Endothelial cell of umbilical vein (primary cell): ENCODE measurements at regions of chr3 and their contacts with region 1.

Region 1: DNA sequence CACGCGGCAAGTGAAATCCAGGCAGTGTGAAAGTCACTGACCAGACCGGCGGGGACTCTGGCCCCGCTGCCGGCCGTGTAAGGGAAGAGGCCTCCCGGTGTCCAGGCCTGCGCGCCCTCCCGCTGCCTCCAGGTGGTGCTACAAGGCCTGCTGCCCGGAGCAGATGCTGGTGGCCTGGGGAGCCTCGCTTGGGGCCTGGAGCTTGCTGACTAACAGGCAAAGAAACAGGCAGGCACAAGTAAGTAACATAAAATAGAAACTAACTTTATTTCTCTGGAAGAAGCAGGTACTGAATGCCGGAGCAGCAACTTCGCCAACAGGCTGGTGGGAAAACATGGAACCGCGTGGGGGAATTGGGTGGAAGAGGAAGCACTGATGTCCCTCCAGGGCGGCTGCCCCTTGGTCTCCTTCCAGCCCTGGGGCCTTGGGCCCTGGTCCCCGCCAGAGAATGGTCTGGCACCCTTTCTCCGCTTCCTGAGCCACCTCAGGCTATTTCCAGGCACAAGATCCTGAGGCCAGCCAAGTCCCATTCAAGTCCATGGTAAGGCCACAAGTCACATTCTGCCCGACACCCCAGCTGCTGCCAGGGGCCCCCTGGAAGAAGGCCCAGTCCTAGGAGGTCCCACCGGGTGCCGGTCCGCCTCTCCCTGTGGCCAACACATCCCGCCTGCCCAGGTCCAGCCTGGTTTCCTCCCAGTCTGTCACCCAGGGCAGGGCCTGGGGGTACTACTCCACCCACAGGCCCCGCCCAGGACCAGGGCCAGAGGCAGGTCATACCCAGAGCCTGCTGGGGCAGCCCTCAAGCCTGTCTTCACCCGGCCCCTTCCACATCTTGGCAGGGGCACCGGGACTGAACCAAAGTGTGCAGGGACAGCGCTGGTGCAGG is 45.0 kb downstream of the TNK2 start:
- DNase-seq: peak; percentile 81
- H3K4me3 ChIP-seq: no peak overlapping the region
- H3K27ac ChIP-seq: no peak overlapping the region
- H3K4me1 ChIP-seq: no peaks in the 10 kb centered on the region
- H3K27me3 ChIP-seq: no peaks in the 10 kb centered on the region
- CTCF ChIP-seq: peak; percentile 97
- POLR2A ChIP-seq: no peak

Region 2: DNA sequence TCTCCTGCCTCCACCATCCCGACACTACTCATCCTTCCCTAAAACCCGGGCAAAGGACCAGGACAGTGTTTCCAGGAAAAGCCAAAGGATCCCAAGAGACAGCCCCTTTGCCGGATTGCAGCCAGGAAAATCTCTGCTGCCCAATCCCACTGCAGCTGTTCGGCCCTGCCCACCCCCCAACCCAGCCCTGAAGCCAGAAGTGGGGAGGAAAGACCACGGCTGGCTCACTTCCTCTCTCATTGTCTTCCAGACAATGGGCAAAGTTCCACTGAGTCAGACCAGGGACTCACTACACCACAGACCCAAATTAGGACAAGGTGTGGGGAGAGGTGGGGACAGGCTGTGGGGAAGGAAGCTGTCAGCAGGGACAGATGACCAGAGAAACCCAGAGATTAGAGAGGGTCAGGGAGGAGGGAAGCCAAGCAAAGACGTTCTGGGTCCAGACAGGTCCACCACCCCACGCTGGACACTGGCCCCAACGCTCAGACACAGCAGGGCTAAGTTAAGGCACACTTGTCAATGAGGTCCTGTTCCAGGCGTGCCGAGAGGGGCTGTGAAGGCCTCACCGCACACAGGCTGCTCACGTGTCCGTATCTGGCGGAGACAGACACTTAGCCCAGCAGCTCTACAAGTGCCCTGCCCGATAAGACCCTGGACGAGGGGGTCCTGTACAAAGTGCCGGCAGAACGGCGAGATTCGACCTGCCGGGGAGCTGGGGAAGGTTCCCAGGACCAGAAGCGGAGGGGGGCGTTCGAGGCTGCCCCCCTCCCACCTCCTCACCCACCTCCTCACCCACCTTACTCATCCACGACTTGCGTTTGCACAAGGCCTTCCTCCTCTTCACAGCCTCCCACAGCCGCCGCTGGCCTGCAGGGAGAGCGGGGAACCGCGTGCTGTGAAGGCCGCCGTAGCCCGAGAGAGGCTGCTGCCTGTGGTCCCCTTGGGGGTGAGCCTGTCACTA is 23.1 kb after region 1 on chr3:
- CTCF ChIA-PET with region 1: interaction called, 454 read pairs
- POLR2A ChIA-PET with region 1: no interaction called
- dilution Hi-C with region 1: no loop called
- intact Hi-C with region 1: no loop called
- DNase-seq: peak; percentile 90
- H3K4me3 ChIP-seq: no peak overlapping the region
- H3K27ac ChIP-seq: peak overlapping the region; percentile 85
- H3K4me1 ChIP-seq: peaks cover 28% of the 10 kb centered on the region
- H3K27me3 ChIP-seq: no peaks in the 10 kb centered on the region
- CTCF ChIP-seq: no peak
- POLR2A ChIP-seq: peak; percentile 36

Region 3: DNA sequence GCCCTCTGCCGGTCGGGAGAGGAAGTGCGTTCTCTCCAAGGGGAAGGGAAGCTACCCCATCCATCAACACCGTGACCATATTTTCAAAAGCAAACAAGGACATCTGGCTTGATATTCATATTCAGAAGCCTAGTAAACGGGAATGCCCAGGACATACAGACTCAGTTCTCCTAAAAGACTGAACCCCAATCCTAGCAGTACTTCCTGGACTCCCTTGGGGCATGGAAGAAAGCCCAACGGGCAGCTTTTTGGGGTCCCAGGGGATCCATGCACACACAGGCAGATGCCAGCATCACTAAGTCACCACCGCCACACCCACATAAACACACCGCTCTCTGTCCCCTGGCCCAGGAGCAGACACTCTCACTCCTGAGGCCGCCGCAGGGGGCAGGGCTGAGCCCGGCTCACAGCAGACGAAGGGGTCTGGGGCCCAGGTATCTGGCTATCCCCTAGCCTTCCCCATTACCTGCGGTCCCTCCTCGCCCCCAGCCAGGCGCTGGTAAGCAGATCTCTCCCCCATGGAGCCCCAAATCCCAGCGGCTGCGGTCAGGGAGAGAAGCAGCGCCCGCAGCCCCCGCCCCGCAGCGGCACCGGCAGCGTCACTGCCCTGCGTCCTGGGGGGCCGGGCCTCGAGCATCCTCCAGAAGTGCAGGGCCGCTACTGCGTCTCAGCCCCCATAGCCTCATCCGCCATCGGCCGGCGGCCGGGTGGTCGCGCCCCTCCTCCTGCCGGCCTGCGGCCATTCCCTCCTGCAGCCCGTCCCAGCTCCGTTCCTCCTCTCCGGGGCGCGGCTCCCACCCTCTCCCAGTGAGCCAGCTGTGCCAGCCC is 31.6 kb after region 1 on chr3:
- CTCF ChIA-PET with region 1: interaction called, 454 read pairs
- POLR2A ChIA-PET with region 1: interaction called, 9 read pairs
- dilution Hi-C with region 1: no loop called
- intact Hi-C with region 1: loop called (anchors 1 kb)
- DNase-seq: peak; percentile 77
- H3K4me3 ChIP-seq: peak overlapping the region; percentile 62 to 80 (median 76)
- H3K27ac ChIP-seq: peak overlapping the region; percentile 46
- H3K4me1 ChIP-seq: peaks cover 45% of the 10 kb centered on the region
- H3K27me3 ChIP-seq: no peaks in the 10 kb centered on the region
- CTCF ChIP-seq: peak; percentile 78 to 92
- POLR2A ChIP-seq: peak; percentile 42

Region 4: DNA sequence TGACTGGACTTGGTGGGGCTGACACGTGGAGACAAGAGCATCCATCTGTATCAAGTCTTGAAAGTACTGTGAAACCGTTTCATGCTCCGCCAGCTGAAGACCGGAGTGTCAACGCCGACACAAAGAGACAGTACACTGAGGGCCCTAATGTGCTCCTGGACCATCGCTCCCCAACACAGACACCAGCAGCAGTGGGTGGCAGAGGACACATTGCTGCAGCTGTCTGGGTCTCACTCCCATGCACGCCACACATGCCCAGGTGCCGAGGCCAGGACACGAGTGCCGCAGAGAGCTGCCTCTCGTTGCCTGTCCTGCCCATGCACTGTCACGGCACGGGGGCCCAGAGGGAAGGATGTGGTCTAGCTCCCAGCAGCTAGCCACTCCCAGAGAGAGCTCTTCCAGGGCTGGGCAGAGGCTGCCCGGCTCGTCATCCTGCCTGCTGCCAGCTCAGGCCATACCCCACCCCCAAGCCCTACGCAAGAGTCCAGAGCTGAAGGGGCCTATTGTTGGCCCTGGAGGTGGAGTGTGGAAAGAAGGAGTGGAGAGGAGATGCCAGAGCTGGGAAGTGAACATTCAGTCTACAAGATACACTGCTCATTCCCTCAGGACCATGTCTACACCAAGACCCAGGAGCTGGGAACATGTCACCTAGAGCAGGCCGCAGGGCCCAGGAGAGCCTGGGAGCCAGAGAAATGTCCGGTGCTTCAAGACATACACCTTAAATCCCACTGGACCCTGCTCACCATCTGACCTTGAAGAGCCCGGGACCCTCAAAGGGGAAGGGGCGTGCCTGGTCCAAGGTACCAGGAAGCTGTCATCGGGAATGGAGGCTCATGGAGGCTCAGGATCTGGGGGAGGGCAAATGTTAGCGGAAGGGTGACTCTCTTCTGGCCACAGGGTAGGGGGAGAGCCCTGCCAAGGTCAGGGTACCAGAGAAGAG is 37.3 kb after region 1 on chr3:
- CTCF ChIA-PET with region 1: interaction called, 454 read pairs
- POLR2A ChIA-PET with region 1: no interaction called
- dilution Hi-C with region 1: no loop called
- intact Hi-C with region 1: no loop called
- DNase-seq: no peak
- H3K4me3 ChIP-seq: no peak overlapping the region
- H3K27ac ChIP-seq: no peak overlapping the region
- H3K4me1 ChIP-seq: peaks cover 30% of the 10 kb centered on the region
- H3K27me3 ChIP-seq: no peaks in the 10 kb centered on the region
- CTCF ChIP-seq: no peak
- POLR2A ChIP-seq: no peak

Region 5: DNA sequence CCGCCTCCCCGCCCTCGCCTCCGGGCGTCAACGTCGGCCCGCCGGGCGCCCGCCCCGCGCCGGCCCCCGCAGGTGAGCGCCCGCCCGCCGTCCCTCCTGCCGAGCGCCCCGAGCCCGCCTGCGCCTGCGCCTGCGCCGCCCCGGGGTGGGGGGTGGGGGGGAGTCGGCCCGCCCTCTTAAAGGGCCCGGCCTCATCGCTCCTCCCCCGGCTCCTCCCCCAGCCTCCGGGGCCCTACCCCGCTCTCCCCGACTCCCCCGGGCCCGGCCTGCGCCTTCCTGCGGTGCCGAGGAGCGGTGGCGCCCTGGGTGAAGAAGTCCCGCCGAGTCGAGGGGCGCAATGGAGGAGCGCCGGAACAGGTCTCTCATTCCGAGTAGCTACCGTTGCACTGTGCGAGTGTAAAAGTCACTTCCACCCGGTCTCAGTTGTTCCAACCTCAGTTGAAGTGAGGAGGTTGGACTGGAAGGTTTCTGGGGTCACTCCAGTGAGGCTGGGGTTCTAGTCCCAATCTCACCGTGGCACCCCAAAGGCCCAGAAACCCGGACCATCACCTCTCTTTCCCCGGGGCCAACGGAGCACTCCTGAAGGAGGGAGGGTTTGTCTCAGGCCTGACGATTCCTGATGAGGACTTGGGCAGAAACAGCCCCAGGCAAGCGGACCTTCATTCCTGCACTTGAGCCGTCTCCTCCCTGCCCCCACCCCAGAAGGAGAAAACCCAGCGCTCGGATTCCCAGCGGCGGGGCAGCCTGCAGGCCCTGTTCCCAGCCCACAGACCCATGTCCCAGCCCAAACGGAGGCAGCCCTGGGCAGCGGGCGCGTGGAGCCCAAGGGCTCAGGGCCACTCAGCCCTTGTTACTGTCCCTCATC is 46.5 kb after region 1 on chr3:
- CTCF ChIA-PET with region 1: interaction called, 101 read pairs
- POLR2A ChIA-PET with region 1: no interaction called
- dilution Hi-C with region 1: no loop called
- intact Hi-C with region 1: loop called (anchors 1 kb)
- DNase-seq: peak; percentile 73
- H3K4me3 ChIP-seq: peak overlapping the region in 2 of 3 experiments; percentile 0 to 54
- H3K27ac ChIP-seq: no peak overlapping the region
- H3K4me1 ChIP-seq: no peaks in the 10 kb centered on the region
- H3K27me3 ChIP-seq: no peaks in the 10 kb centered on the region
- CTCF ChIP-seq: no peak
- POLR2A ChIP-seq: no peak

Region 6: GRCh38 chr3:196412704-196413103 is 549.3 kb after region 1 on chr3:
- CTCF ChIA-PET with region 1: no interaction called
- POLR2A ChIA-PET with region 1: no interaction called
- dilution Hi-C with region 1: no loop called
- intact Hi-C with region 1: no loop called
- DNase-seq: no peak
- H3K4me3 ChIP-seq: no peak overlapping the region
- H3K27ac ChIP-seq: no peak overlapping the region
- H3K4me1 ChIP-seq: no peaks in the 10 kb centered on the region
- H3K27me3 ChIP-seq: no peaks in the 10 kb centered on the region
- CTCF ChIP-seq: no peak
- POLR2A ChIP-seq: no peak